IMR-90 (cell line): ENCODE measurements at regions of chr9 and their contacts with region 1.

Region 1: DNA sequence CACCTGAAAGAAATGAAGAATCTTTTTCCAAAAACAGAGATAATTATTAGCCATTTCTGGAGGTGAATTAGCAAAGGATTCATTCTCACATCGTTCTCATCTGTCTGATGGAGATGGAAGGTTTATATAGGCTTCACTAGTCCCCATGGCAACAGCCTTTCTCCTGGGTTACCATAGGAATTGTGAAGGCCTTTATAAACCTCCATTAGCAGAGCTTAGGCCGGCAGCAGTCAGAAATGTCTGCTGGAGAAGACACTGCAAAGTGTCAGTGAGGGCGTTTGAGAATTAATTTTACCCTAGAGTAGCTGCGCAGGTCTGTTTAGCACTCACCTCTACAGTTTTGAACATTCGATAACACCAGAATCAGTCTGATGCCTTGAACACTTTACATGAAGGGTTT is 290.4 kb upstream of the NR4A3 start:
- DNase-seq: no peak
- ATAC-seq: no peak
- H3K4me3 ChIP-seq: no peak overlapping the region
- H3K27ac ChIP-seq: no peak overlapping the region
- H3K4me1 ChIP-seq: no peaks in the 10 kb centered on the region
- H3K27me3 ChIP-seq: peaks cover 7% of the 10 kb centered on the region
- CTCF ChIP-seq: no peak
- POLR2A ChIP-seq: no peak
- RAD21 ChIP-seq: no peak

Region 2: DNA sequence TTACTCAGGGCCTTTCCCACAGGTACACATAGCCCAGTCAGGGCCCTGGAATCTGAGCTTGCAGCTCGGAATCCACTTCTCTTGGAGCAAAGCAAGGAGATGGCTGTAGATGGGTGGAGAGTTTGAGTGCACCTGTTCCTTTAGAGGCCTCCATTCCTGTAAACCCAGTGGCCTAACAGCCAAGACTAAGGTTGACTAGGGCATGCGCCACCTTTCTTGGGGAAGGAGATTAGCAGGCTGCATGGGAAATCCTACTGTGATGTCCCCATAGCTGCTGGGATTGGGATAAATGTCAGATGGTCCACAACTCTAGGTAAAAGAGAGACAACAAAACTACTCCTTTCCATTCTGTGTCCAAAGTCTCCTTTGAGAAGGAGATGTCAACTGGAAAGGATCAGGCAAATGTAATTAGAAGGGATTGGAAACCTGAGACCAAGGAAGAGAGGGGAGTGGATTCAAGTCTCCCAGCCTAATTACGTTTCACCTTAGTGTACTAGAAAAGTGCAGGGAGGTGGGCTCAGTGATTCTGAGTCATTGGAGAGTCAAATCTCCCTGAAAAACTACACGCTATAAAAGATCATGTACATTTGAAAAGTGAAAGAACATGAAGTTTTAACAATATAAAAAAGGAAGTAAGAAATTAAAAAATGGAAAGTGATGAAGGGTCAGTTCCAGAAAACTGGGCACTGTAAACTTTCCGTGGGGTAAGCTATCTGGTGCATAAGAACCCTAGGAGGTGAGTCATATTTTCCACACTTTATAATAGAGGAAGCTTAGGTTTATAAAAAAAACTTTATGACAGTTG is 205.0 kb before region 1 on chr9:
- CTCF ChIA-PET with region 1: no interaction called
- POLR2A ChIA-PET with region 1: no interaction called
- dilution Hi-C with region 1: no loop called
- in situ Hi-C with region 1: no loop called
- intact Hi-C with region 1: no loop called
- DNase-seq: peak; percentile 28
- ATAC-seq: no peak; the same call in 1 of the 2 replicates
- H3K4me3 ChIP-seq: no peak overlapping the region
- H3K27ac ChIP-seq: no peak overlapping the region
- H3K4me1 ChIP-seq: no peaks in the 10 kb centered on the region
- H3K27me3 ChIP-seq: peaks cover 10% of the 10 kb centered on the region
- CTCF ChIP-seq: no peak
- POLR2A ChIP-seq: no peak
- RAD21 ChIP-seq: no peak

Region 3: GRCh38 chr9:99513441-99514112 is 17.7 kb before region 1 on chr9:
- CTCF ChIA-PET with region 1: no interaction called
- POLR2A ChIA-PET with region 1: no interaction called
- dilution Hi-C with region 1: no loop called
- in situ Hi-C with region 1: no loop called
- intact Hi-C with region 1: loop called (anchors 2 kb)
- DNase-seq: no peak
- ATAC-seq: no peak
- H3K4me3 ChIP-seq: no peak overlapping the region
- H3K27ac ChIP-seq: no peak overlapping the region
- H3K4me1 ChIP-seq: no peaks in the 10 kb centered on the region
- H3K27me3 ChIP-seq: peaks cover 13% of the 10 kb centered on the region; the same call in 1 of the 2 replicates
- CTCF ChIP-seq: no peak
- POLR2A ChIP-seq: no peak
- RAD21 ChIP-seq: no peak